HCT116 (cell line): ENCODE measurements at regions of chr3 and their contacts with region 1.

Region 1: DNA sequence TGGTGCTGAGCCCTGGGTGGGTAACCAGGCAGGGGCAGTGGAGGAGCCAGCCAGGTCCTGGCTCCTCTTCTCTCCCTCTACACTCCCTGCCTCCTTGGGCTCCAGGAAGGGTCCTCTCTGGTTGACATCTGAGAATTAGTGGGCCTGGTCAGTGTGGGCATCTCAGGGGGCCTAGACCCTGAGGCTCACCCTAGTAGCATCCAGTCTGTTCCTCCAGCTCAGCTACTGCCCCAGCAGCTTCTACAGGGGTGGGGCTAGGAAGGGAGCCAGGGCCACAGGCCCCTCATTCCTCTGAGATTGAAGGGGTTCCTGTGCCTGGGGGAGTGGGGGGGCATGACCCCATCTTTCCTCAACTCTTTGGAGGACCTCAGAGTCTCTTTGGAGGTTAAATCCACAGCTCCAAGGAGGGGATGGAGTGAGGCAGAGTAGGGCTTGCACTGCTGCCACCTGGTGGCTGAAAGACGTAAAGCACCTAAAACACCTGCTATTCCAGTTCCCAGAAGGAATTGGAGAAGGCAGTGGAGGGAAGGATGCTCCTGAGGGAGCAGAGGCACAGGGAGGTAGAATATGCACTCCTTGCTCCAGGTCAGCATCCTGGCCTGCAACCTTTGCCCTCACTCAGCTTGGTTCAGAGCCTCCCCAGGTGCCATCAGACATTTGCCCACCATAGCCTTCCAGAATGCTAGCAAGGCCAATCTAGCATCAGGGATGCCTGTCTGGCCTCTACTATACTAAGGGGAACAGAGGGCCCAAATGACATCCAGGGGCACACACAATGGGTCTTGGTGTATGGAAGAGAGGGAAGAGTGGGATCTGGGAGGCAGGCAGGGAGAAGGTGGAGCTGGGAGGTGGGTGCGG is 25.1 kb downstream of the C3orf18 start:
- DNase-seq: peak; percentile 41
- ATAC-seq: peak; percentile 91
- H3K4me3 ChIP-seq: no peak overlapping the region
- H3K27ac ChIP-seq: no peak overlapping the region
- H3K4me1 ChIP-seq: peaks cover 0 to 11% of the 10 kb centered on the region in 2 experiments; a peak in 2 of 4 replicates
- H3K27me3 ChIP-seq: peaks cover 6% of the 10 kb centered on the region; the same call in 1 of the 2 replicates
- CTCF ChIP-seq: peak; percentile 91 to 94 (median 93)
- POLR2A ChIP-seq: no peak
- RAD21 ChIP-seq: peak; percentile 86

Region 2: DNA sequence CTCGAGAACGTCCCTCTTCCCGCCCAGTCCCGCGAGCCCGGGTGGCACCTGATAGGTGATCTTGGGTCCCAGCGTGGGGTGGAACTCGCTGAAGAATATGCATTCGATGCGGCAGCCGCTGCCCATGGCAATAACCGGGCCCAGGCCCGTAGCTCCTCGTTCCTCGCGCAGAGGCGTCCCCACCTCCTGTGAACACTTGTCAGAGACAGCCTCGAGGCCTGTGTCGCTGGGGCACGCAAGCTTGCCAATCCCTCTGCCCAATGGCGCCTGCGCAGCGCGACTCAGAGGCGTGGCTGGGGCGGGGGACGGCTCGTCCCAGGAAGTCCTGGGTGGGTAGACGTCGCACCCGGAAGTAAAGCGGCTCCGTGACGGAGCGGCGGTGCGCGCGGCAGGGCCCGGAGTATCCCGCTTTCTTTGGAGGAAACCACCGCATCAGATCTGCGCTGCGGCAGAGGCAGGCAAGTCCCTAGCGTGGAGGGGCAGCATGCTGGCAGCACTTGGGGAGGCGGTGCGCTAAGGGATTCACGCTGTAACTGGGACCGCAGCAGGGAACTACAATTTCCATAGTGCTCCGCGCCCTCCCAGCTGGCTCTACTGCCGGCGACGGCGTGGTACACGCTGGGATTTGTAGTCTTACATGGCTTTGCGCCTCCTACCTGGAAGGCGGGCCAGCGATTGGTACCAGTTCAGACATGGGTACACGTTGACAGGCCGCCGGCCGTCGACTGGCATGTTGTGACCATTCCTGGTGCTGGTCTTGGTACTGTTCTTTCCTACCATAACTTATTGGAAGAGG is 191.7 kb before region 1 on chr3 and contains the starts of genes CYB561D2 and NPRL2:
- CTCF ChIA-PET with region 1: interaction called, 25 read pairs
- POLR2A ChIA-PET with region 1: interaction called, 5 read pairs
- RAD21 ChIA-PET with region 1: interaction called in 1 of 2 experiments, 3 read pairs
- intact Hi-C with region 1: no loop called
- DNase-seq: peak; percentile 89
- ATAC-seq: peak; percentile 92
- H3K4me3 ChIP-seq: peak within 1 kb of the TSS; percentile 73 to 83
- H3K27ac ChIP-seq: peak within 1 kb of the TSS; percentile 70
- H3K4me1 ChIP-seq: peaks cover 6 to 37% of the 10 kb centered on the region in 2 experiments
- H3K27me3 ChIP-seq: no peaks in the 10 kb centered on the region
- CTCF ChIP-seq: no peak
- POLR2A ChIP-seq: peak; percentile 78
- RAD21 ChIP-seq: no peak
- total RNA-seq, gene CYB561D2: 9.5 TPM
- total RNA-seq, gene NPRL2: 35.4 TPM

Region 3: DNA sequence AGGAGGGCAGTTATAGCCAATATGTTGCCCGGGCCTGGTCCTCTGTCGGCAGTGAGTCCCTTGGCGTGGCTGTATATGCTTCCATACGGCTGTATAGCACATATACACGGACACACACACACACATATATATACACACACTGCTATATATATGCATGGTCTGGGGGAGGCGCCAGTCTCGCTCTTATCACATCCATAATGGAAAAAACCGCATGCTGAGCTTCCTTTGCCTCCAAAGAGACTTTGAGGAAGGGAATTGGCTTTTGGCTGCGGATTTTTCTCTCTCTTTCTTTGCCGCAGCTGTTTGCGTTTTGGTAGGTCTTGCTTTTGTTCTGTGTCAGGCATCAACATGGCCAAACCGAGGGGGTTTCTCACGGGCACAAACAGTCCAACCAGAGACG is 171.8 kb before region 1 on chr3:
- CTCF ChIA-PET with region 1: interaction called, 12 read pairs
- POLR2A ChIA-PET with region 1: no interaction called
- RAD21 ChIA-PET with region 1: interaction called, 5 to 6 read pairs
- intact Hi-C with region 1: no loop called
- DNase-seq: no peak
- ATAC-seq: peak; percentile 68
- H3K4me3 ChIP-seq: no peak overlapping the region
- H3K27ac ChIP-seq: no peak overlapping the region
- H3K4me1 ChIP-seq: peaks cover 4 to 12% of the 10 kb centered on the region in 2 experiments; a peak in 2 of 4 replicates
- H3K27me3 ChIP-seq: no peaks in the 10 kb centered on the region
- CTCF ChIP-seq: peak in 2 of 3 experiments; percentile 31 to 55; a peak in 5 of 6 replicates
- POLR2A ChIP-seq: no peak
- RAD21 ChIP-seq: peak; percentile 67

Region 4: DNA sequence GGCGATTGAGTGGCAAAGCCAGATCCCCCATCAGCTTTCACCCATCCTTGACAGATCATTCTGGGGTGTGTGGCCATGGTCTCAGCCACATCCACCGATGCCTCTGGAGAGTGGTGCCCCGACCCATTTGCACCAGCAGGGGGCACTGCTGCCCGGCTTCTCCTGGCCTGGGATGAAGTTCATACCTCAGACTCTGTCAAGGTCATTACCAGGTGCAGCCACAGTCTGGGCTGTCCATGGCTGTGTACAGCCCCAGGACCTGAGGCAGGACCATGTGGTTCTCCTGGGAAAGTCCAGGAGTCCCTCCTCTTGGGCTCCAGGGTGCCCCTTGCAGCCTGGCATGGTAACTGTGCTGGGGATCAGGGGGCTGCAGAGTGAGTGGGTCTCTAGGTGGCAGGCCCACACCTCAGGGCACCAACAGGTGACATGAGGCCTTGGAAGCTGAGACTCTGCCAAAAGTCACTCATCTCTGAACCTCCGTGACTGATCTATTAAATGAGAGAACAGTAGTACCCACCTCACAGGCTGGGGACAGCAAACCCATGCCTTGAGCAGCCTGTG is 106.2 kb before region 1 on chr3:
- CTCF ChIA-PET with region 1: interaction called, 5 read pairs
- POLR2A ChIA-PET with region 1: no interaction called
- RAD21 ChIA-PET with region 1: interaction called in 1 of 2 experiments, 3 read pairs
- intact Hi-C with region 1: loop called (anchors 1 kb)
- DNase-seq: peak; percentile 19
- ATAC-seq: peak; percentile 98
- H3K4me3 ChIP-seq: no peak overlapping the region
- H3K27ac ChIP-seq: no peak overlapping the region
- H3K4me1 ChIP-seq: no peaks in the 10 kb centered on the region
- H3K27me3 ChIP-seq: no peaks in the 10 kb centered on the region
- CTCF ChIP-seq: peak; percentile 80 to 97 (median 94)
- POLR2A ChIP-seq: no peak
- RAD21 ChIP-seq: peak; percentile 79

Region 5: GRCh38 chr3:50519471-50520089 is 22.8 kb before region 1 on chr3:
- CTCF ChIA-PET with region 1: interaction called, 5 read pairs
- POLR2A ChIA-PET with region 1: no interaction called
- RAD21 ChIA-PET with region 1: no interaction called
- intact Hi-C with region 1: loop called (anchors 1 kb)
- DNase-seq: peak; percentile 60
- ATAC-seq: peak; percentile 97
- H3K4me3 ChIP-seq: no peak overlapping the region
- H3K27ac ChIP-seq: no peak overlapping the region
- H3K4me1 ChIP-seq: peaks cover 0 to 6% of the 10 kb centered on the region in 2 experiments; a peak in 1 of 4 replicates
- H3K27me3 ChIP-seq: peaks cover 7% of the 10 kb centered on the region; the same call in 1 of the 2 replicates
- CTCF ChIP-seq: peak; percentile 89 to 97 (median 97)
- POLR2A ChIP-seq: no peak
- RAD21 ChIP-seq: peak; percentile 76

Region 6: DNA sequence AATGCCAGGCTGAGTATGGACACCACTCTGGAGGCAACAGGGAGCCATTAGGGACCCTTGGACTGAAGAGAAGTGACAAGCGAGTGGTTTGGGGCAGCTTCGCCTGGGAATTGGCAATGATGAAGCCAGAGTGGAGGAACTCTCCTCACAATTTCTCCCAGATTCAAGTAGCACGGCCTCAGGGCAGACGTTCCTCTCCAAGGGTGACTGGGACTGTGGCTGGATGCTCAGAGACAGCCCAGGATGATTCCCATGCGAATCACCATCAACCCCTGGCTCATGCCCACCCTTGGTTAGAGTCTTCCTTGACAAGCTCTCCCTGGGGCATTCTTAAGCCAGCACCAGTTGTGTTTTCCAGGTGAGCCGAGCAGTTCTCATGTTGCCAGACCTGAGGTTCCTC is 116.0 kb after region 1 on chr3:
- CTCF ChIA-PET with region 1: no interaction called
- POLR2A ChIA-PET with region 1: no interaction called
- RAD21 ChIA-PET with region 1: no interaction called
- intact Hi-C with region 1: no loop called
- DNase-seq: no peak
- ATAC-seq: no peak
- H3K4me3 ChIP-seq: no peak overlapping the region
- H3K27ac ChIP-seq: no peak overlapping the region
- H3K4me1 ChIP-seq: peaks cover 9 to 29% of the 10 kb centered on the region in 2 experiments
- H3K27me3 ChIP-seq: no peaks in the 10 kb centered on the region
- CTCF ChIP-seq: no peak
- POLR2A ChIP-seq: no peak
- RAD21 ChIP-seq: no peak

Region 7: GRCh38 chr3:50714946-50715345 is 172.5 kb after region 1 on chr3:
- CTCF ChIA-PET with region 1: no interaction called
- POLR2A ChIA-PET with region 1: no interaction called
- RAD21 ChIA-PET with region 1: no interaction called
- intact Hi-C with region 1: no loop called
- DNase-seq: no peak
- ATAC-seq: no peak
- H3K4me3 ChIP-seq: no peak overlapping the region
- H3K27ac ChIP-seq: no peak overlapping the region
- H3K4me1 ChIP-seq: no peaks in the 10 kb centered on the region
- H3K27me3 ChIP-seq: no peaks in the 10 kb centered on the region
- CTCF ChIP-seq: no peak
- POLR2A ChIP-seq: no peak
- RAD21 ChIP-seq: no peak